Activated naive CD4-positive, alpha-beta T cell treated with anti-CD3 and anti-CD28 coated beads for 36 hours (primary cell): ENCODE measurements at regions of chr4 and their contacts with region 1.

Region 1: GRCh38 chr4:110087070-110087708 is 111.2 kb downstream of the ELOVL6 start:
- DNase-seq: no peak
- H3K4me3 Mint-ChIP-seq: no peak overlapping the region
- H3K27ac Mint-ChIP-seq: peak overlapping the region; percentile 18
- H3K4me1 Mint-ChIP-seq: peaks cover 56% of the 10 kb centered on the region
- H3K27me3 Mint-ChIP-seq: no peaks in the 10 kb centered on the region

Region 2: GRCh38 chr4:109947457-109947856 is 139.7 kb before region 1 on chr4:
- CTCF ChIA-PET with region 1: no interaction called
- intact Hi-C with region 1: loop called (anchors 1 kb)
- DNase-seq: no peak
- H3K4me3 Mint-ChIP-seq: no peak overlapping the region
- H3K27ac Mint-ChIP-seq: peak overlapping the region; percentile 65
- H3K4me1 Mint-ChIP-seq: peaks cover 27% of the 10 kb centered on the region
- H3K27me3 Mint-ChIP-seq: no peaks in the 10 kb centered on the region

Region 3: DNA sequence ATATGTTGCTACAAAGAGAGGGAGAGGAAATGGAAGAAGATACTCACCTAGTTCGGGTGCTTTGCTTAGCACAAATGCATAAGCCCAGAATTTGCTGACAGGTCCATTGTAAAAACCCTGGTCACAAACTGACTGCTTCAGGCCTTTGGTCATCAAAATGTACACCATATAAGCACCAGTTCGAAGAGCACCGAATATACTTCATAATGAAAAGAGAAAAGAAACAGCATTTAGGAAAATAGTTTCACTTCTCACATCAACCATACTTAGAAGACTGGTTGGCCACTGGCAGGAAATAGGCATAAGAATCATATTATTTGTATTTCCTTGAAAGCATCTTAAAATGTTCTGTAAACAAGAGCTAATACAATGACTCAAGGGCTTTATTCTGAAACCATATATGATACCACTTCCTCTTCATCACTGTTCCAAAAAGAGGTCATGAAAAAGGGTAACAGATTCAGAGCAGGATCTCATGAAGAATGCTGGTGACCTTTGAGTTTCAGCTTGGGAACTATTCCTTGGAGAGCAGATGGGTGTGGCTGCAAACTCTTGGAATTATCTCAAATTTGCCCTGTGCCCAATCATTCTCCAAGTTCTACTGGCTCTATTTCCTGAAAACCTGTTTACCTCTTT is 27.5 kb before region 1 on chr4:
- CTCF ChIA-PET with region 1: interaction called, 3 read pairs
- intact Hi-C with region 1: loop called (anchors 2 kb)
- DNase-seq: no peak
- H3K4me3 Mint-ChIP-seq: no peak overlapping the region
- H3K27ac Mint-ChIP-seq: no peak overlapping the region
- H3K4me1 Mint-ChIP-seq: peaks cover 22% of the 10 kb centered on the region
- H3K27me3 Mint-ChIP-seq: no peaks in the 10 kb centered on the region

Region 4: DNA sequence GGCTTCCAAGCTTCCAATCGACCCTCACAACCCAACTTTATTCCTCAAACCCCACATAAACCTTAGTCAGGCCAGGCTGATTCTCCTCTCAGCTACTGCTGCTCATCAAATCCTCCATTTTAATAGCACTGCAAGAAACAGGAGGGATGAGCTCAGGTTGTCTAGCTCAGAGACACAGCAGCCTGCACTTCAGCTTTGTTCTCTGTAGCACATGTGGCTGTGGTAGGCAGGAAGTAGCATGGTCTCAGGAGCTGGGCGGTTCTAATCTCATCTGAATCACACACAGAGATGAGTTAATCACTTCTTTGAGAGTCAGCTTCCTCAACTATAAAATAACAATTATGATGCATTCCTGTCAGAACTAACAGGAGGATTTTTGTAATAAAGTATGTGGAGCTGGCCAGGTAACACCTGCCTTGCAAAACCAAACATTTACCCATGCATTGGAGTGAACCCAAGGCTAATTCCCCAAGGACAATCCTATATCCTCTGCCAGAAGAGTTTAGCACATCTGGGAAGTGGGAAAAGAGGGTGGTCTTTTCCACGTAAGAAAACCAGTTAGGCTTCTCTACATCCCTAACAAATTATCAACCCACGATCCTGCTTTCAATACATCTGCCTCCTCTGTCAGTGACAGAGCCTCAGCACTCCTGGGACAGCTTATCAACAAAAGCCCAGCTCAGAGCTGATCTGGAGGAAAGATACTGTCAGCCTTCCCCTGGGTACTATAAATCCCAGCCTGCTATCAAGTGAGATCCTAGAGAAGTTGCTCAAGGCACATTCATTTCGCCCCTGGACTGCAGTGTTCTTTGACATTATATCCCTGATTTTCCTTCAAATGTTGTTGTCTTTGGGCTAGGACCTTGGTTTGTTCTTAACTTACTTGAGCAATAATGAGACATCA is 78.4 kb after region 1 on chr4:
- CTCF ChIA-PET with region 1: no interaction called
- intact Hi-C with region 1: loop called (anchors 1 kb)
- DNase-seq: peak; percentile 85
- H3K4me3 Mint-ChIP-seq: peak overlapping the region; percentile 54
- H3K27ac Mint-ChIP-seq: peak overlapping the region; percentile 95
- H3K4me1 Mint-ChIP-seq: peaks cover 35% of the 10 kb centered on the region
- H3K27me3 Mint-ChIP-seq: no peaks in the 10 kb centered on the region